Dorsolateral prefrontal cortex (tissue), 120 donors: ENCODE measurements at regions of chr13 and their contacts with region 1.

Region 1: DNA sequence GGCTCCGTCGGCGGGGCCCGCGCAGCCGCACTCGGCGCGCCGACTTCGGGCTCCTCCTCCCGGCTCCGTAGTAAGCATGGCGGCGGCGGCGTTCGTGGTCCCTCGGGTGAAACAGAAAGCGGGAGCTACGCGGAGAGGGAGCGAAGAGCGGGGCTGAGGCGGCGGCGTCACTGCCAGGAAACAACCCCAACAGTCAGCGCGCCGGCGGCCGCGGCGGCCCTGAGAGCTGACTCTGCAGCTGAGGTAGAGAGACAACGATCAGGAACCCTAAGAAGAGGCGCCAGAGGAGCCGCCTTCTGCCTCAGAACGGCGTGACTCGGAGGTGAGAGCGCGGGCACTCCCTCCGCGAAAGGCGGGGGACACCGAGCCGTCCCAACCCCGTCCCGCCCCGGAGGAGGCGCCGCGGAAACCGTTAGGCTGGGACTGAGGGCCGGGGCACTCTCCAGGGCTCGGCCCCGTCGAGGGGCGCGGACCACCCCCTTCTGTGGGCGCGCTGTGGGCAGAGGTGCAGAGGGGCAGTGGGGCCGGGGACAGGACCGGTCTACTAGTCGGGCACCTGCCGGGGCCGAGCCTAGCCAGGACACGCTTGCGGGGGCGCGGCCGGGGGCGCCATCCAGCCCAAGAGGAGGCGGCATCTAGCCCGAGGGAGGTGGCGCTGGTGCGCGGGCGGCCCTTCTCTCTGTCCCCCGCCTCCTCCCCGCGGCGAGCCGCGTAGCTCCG is at the start of gene FNDC3A:
- DNase-seq: peak; percentile 59 to 86 (median 68)
- H3K4me3 ChIP-seq: peak within 1 kb of the TSS; percentile 69 to 98 (median 88)
- H3K27ac ChIP-seq: peak within 1 kb of the TSS; percentile 78 to 100 (median 97)
- H3K27me3 ChIP-seq: no peaks in the 10 kb centered on the region
- CTCF ChIP-seq: peak in 36 of 56 donors; percentile 7 to 61 (median 27)
- total RNA-seq, gene FNDC3A: 37.4 to 60.1 (median 50.2) TPM

Region 2: DNA sequence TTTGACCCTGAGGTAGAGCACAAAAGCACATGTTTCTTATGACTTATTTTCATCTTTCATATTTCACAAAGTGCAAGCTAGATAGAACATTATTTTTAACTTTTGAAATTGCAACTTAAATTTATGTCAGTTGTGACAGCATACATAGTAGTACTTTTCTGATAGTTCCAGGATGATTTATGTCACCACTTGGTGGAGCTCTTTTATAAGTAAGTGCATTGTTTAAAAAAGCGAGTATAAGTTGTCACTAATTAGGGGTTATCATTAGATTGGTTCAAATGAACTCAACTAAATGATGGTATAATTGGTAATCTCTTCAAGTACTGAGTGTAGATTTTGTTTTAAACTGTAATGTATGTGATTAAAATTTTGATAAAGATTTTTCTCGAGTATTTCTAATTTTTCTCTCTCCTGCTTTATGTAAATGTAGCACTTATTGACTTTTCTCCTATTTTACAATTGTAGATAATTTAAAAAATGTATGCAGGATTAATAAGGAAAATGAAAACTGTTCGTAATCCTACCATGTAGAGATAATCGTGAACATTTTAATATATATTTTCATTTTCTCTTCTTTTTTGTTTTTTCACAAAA is 641.4 kb before region 1 on chr13:
- intact Hi-C with region 1: no loop called
- DNase-seq: no peak
- H3K4me3 ChIP-seq: no peak overlapping the region
- H3K27ac ChIP-seq: no peak overlapping the region
- H3K27me3 ChIP-seq: no peaks in the 10 kb centered on the region
- CTCF ChIP-seq: peak; percentile 40 to 90 (median 76)

Region 3: GRCh38 chr13:48595431-48596429 is 380.3 kb before region 1 on chr13:
- intact Hi-C with region 1: loop called in 1 of 2 experiments (anchors 10 kb)
- DNase-seq: peak in 8 of 10 donors; percentile 34 to 60 (median 46)
- H3K4me3 ChIP-seq: no peak overlapping the region
- H3K27ac ChIP-seq: no peak overlapping the region
- H3K27me3 ChIP-seq: no peaks in the 10 kb centered on the region
- CTCF ChIP-seq: peak; percentile 25 to 84 (median 70)

Region 4: GRCh38 chr13:49110122-49110912 is 134.3 kb after region 1 on chr13:
- intact Hi-C with region 1: loop called in 1 of 2 experiments (anchors 10 kb)
- DNase-seq: peak; percentile 60 to 86 (median 80)
- H3K4me3 ChIP-seq: peak overlapping the region; percentile 43 to 88 (median 70)
- H3K27ac ChIP-seq: peak overlapping the region in 51 of 59 donors; percentile 5 to 84 (median 62)
- H3K27me3 ChIP-seq: no peaks in the 10 kb centered on the region
- CTCF ChIP-seq: peak in 19 of 56 donors; percentile 8 to 45 (median 16)

Region 5: GRCh38 chr13:49314344-49314882 is 338.4 kb after region 1 on chr13:
- intact Hi-C with region 1: no loop called
- DNase-seq: no peak
- H3K4me3 ChIP-seq: no peak overlapping the region
- H3K27ac ChIP-seq: peak overlapping the region in 32 of 59 donors; percentile 9 to 80 (median 51)
- H3K27me3 ChIP-seq: no peaks in the 10 kb centered on the region
- CTCF ChIP-seq: no peak

Region 6: GRCh38 chr13:49585220-49586157 is 609.5 kb after region 1 on chr13 and contains the start of gene RCBTB1:
- intact Hi-C with region 1: loop called in 1 of 2 experiments (anchors 10 kb)
- DNase-seq: peak; percentile 43 to 73 (median 57)
- H3K4me3 ChIP-seq: peak within 1 kb of the TSS; percentile 66 to 100 (median 95)
- H3K27ac ChIP-seq: peak within 1 kb of the TSS; percentile 68 to 98 (median 91)
- H3K27me3 ChIP-seq: no peaks in the 10 kb centered on the region
- CTCF ChIP-seq: peak in 19 of 56 donors; percentile 5 to 42 (median 25)
- total RNA-seq, gene RCBTB1: 22.3 to 65.9 (median 35.9) TPM